Activated T-helper 1 cell treated with anti-CD3 and anti-CD28 coated beads, Interleukin-12 subunit alpha, Interleukin-12 subunit beta, Interleukin-2, Interleukin-4 antibody, amounts not matched to agents 30 ng/mL and 10 ng/mL and 1 ng/mL, durations not matched to agents 14 hours and 24 hours and 36 hours (primary cell): ENCODE measurements at regions of chr20 and their contacts with region 1.

Region 1: GRCh38 chr20:63537525-63538203 is 488 bp upstream of the PTK6 start:
- DNase-seq: peak; percentile 95
- H3K4me3 Mint-ChIP-seq: peak overlapping the region; percentile 68
- H3K27ac Mint-ChIP-seq: peak overlapping the region; percentile 90
- H3K4me1 Mint-ChIP-seq: no peaks in the 10 kb centered on the region
- H3K27me3 Mint-ChIP-seq: peaks cover 1% of the 10 kb centered on the region

Region 2: DNA sequence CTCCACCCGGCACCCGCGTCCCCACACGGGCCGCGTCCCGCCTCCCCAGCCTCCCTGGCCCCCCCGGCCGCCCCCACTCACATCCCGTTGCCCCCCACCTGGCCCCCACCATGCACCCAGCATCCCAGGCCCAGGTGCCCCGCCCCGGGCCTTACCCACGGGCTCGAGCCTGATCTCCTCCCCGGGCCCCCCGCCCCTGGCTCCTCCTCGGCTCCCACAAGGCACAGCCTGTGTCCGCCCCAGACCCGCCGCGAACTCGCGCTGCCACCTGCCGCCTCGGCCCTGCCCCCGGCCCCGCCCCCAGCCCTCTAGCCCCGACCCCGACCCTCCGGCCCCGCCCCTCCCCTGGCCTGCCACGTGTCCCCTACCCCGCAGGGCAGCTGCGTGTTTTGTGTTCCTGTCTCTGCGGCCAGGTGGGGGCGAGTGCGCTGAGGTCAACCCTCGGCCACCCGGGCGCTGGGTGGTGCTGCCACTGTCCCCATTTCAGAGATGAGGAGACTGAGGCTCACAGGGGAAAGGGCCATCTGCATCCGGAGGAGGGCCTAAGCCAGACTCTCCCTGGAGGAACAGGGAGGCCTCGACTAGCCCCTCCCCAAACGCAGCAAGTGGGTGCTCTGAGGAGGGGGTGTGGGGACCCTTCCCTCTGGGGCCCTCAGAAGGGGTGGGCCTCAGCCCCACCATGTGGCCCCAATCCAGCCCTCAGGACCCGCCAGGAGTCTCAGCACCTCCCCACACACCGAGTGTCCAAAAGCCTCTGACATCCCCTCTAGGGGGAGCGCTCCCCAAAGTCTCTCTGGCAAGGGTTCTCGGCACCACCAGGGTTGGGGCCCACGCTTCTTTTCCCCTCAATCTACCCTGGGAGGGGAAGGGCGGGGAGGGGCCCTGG is 1571.8 kb before region 1 on chr20:
- intact Hi-C with region 1: no loop called
- DNase-seq: no peak
- H3K4me3 Mint-ChIP-seq: no peak overlapping the region
- H3K27ac Mint-ChIP-seq: no peak overlapping the region
- H3K4me1 Mint-ChIP-seq: no peaks in the 10 kb centered on the region
- H3K27me3 Mint-ChIP-seq: peaks cover 15% of the 10 kb centered on the region

Region 3: DNA sequence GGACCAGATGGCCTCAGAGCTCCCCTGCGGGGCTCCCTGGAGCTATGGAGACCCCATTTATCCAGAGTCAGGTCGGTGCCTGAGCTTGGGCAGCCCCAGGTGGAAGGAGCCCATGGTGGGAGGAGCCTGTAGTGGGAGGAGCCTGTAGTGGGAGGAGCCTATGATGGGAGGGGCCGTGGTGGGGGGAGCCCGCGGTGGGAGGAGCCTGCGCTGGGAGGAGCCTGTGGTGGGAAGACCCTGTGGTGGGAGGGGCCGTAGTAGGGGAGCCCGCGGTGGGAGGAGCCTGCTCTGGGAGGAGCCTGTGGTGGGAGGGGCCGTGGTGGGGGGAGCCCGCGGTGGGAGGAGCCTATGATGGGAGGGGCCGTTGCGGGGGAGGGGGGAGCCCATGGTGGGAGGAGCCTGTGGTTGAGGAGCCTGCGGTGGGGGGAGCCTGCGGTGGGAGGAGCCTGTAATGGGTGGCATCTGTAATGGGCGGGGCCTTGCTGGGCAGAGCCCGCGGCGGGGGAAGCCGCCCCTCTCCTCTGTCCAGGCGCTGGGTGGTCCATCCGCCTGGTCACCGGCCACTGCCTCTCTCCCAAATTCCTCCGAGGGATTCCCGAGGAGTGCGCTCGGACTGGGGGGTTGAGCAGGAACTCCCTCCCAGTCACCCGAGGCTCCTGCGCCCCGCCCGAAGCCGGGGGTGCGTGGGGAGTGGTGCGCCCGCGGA is 15.7 kb after region 1 on chr20:
- intact Hi-C with region 1: loop called (anchors 1 kb)
- DNase-seq: peak; percentile 86
- H3K4me3 Mint-ChIP-seq: peak overlapping the region; percentile 63
- H3K27ac Mint-ChIP-seq: peak overlapping the region; percentile 55
- H3K4me1 Mint-ChIP-seq: peaks cover 9% of the 10 kb centered on the region
- H3K27me3 Mint-ChIP-seq: peaks cover 19% of the 10 kb centered on the region

Region 4: GRCh38 chr20:63565699-63566335 is 28.2 kb after region 1 on chr20:
- intact Hi-C with region 1: no loop called
- DNase-seq: no peak
- H3K4me3 Mint-ChIP-seq: no peak overlapping the region
- H3K27ac Mint-ChIP-seq: no peak overlapping the region
- H3K4me1 Mint-ChIP-seq: peaks cover 8% of the 10 kb centered on the region
- H3K27me3 Mint-ChIP-seq: no peaks in the 10 kb centered on the region

Region 5: DNA sequence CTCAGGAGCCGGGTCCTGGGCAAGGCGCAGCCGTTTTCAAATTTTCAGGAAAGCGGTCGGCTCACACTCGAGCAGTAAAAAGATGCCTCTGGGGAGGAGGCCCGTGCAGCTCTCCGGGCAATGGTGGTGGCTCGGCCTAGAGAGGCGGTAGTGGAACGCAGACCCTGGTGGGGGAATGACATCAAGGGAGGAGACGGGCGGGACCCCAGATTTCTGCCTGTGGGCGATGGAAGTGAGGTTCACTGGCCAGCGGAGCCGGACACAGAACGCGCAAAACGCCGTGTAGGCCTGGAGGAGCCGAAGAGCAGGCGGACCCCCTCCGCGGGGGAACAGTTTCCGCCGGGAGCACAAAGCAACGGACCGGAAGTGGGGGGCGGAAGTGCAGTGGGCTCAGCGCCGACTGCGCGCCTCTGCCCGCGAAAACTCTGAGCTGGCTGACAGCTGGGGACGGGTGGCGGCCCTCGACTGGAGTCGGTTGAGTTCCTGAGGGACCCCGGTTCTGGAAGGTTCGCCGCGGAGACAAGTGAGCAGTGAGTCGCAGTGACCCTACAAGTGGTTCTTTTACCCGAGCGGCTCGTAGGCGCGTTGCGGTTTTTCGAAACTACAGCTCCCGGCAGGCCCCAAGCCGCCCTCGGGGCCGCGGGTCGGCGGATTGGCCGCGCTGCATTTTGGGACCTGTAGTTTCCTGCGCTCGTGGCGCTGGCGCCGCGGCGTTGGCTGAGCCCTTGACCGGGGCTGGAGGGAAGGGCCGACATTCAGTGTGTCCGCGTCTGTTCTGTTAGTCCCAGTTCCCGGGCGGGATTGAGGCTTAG is 120.5 kb after region 1 on chr20 and contains the start of gene RTEL1:
- intact Hi-C with region 1: loop called (anchors 1 kb)
- DNase-seq: peak; percentile 87
- H3K4me3 Mint-ChIP-seq: peak within 1 kb of the TSS; percentile 94
- H3K27ac Mint-ChIP-seq: peak within 1 kb of the TSS; percentile 95
- H3K4me1 Mint-ChIP-seq: peaks cover 41% of the 10 kb centered on the region
- H3K27me3 Mint-ChIP-seq: peaks cover 7% of the 10 kb centered on the region
- total RNA-seq, gene RTEL1: 54.4 and 55.5 TPM in 2 replicates

Region 6: DNA sequence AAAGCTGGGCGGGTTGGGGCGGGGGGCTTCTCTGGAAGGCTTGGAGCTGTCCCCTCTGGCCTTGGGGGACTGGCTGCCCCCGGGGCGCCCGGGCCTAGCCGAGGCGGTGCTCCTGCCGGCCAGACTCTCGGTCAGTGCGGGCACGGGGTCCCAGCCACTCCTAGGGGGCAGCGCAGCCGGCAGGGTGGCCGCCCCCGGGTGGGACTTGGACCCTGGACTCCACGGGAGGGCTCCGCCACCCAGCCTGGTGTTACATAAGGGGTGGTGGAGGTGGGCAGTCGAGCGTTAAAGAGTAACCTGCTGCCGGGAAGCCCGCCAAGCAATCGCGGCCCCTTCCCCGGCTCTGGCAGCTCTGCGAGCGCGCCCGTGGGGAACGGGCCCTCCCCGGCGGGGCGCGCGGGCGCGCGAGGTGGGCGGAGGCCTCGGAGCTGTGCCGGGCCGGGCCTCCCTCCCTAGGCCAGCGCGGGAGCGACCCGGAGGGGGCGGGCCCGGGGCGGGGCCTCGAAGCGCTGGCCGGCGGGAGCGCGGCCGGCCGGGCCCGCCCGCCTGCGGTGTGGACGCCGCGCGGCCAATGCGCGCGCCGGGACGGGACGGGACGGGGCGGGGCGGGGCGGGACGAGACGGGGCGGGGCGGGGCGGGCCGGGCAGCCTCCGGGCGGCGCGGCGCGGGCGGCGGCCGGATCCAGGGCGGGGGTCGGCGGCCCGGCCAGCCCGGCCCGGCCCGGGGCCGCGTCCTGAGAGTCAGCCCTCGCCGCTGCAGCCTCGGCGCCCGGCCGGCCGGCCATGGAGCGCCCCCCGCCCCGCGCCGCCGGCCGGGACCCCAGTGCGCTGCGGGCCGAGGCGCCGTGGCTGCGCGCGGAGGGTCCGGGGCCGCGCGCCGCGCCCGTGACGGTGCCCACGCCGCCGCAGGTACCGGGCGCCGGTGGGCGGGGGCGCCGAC is 201.7 kb after region 1 on chr20 and contains the start of gene SLC2A4RG:
- intact Hi-C with region 1: loop called (anchors 5 kb)
- DNase-seq: peak; percentile 68
- H3K4me3 Mint-ChIP-seq: peak within 1 kb of the TSS; percentile 53
- H3K27ac Mint-ChIP-seq: no peak within 1 kb of the TSS
- H3K4me1 Mint-ChIP-seq: peaks cover 11% of the 10 kb centered on the region
- H3K27me3 Mint-ChIP-seq: no peaks in the 10 kb centered on the region
- total RNA-seq, gene SLC2A4RG: 34.7 and 38.3 TPM in 2 replicates

Region 7: DNA sequence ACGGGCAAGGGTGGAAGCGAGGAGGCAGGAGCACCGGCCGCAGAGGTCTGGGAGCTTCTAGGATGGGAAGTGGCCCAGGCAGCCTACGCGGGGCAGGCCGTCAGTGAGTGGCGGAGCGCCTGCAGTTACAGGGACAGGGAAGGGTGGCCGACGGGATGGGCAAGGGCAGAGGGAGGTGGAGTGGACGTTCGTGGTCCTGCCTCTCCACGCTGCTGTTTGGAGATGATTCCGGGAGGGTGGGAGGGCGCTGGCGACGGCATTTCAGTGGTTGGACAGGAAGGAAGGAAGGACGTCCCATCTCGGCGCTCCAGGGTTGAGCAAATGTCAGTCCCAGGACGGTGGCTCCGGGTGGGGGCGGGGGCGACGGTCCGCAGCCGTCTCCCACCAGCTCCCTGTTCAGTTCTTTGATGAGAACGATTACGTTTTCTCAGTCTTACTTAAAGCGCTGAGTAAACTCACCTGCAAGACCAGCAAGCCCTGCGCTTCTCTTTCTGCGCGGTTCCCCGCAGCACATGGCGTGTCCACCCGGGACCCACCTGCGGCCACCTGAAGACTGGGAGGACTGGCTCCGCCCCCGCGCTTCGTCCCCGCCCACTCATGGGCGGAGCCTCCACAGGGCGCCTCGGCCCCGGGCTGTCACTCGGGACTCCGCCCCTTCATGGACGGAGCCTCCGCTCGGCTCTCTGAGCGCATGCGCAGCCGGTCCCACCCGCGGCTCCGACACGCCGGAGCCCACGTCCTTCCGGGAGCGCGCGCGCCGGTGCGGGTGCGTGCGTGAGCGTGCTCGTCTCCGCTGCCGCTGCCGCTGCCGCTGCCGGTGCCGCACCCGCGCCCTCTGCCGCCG is 356.9 kb after region 1 on chr20 and contains the start of gene DNAJC5:
- intact Hi-C with region 1: loop called (anchors 1 kb)
- DNase-seq: peak; percentile 98
- H3K4me3 Mint-ChIP-seq: peak within 1 kb of the TSS; percentile 89
- H3K27ac Mint-ChIP-seq: peak within 1 kb of the TSS; percentile 96
- H3K4me1 Mint-ChIP-seq: peaks cover 42% of the 10 kb centered on the region
- H3K27me3 Mint-ChIP-seq: no peaks in the 10 kb centered on the region
- total RNA-seq, gene DNAJC5: 47.5 and 48.2 TPM in 2 replicates

Region 8: GRCh38 chr20:63980806-63981728 is 443.4 kb after region 1 on chr20 and contains the start of gene PRPF6:
- intact Hi-C with region 1: loop called (anchors 1 kb)
- DNase-seq: peak; percentile 94
- H3K4me3 Mint-ChIP-seq: peak within 1 kb of the TSS; percentile 98
- H3K27ac Mint-ChIP-seq: peak within 1 kb of the TSS; percentile 99
- H3K4me1 Mint-ChIP-seq: peaks cover 64% of the 10 kb centered on the region
- H3K27me3 Mint-ChIP-seq: no peaks in the 10 kb centered on the region
- total RNA-seq, gene PRPF6: 82.3 and 83.6 TPM in 2 replicates

Region 9: DNA sequence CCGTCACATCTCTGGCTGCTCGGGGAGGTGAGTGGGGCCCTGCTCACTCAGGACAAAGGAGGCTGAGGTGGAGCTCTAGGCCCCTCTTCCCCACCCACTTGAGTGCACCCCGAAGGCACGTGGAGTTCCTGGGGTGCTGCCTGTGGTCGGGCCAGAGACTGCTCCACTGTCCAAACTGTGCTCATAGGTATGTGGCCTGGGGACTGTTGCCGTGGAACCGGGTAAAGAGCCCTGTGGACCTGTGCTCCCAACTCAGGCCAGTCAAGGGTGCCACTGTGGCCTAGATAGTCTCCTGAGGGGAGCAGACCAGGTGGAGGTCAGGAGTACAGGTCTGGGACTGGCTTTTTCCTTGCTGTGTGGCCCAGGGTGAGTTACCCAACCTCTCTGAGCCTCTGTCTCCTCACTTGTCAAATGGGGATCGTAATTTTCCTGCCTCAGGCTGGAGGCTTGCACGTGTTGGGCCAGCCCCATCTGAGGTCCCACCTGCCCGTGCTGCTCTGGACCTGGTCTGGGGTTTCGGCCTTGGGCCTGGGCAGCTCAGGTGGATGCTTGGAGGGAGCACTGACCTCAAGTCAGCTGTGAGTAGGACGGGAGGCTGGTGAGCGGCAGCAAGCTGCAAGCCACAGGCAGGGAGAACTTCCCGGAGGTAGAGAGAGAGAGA is 582.1 kb after region 1 on chr20:
- intact Hi-C with region 1: loop called (anchors 2 kb)
- DNase-seq: no peak
- H3K4me3 Mint-ChIP-seq: peak overlapping the region; percentile 51
- H3K27ac Mint-ChIP-seq: peak overlapping the region; percentile 44
- H3K4me1 Mint-ChIP-seq: peaks cover 10% of the 10 kb centered on the region
- H3K27me3 Mint-ChIP-seq: peaks cover 13% of the 10 kb centered on the region